ENCODE measurements at regions of chr19 and their contacts with region 1.

Region 1: GRCh38 chr19:30669329-30670010 is 297.3 kb downstream of the ZNF536 start:
- DNase-seq: no peak
- H3K4me3 ChIP-seq: no peak overlapping the region
- CTCF ChIP-seq: peak; percentile 87

Region 2: DNA sequence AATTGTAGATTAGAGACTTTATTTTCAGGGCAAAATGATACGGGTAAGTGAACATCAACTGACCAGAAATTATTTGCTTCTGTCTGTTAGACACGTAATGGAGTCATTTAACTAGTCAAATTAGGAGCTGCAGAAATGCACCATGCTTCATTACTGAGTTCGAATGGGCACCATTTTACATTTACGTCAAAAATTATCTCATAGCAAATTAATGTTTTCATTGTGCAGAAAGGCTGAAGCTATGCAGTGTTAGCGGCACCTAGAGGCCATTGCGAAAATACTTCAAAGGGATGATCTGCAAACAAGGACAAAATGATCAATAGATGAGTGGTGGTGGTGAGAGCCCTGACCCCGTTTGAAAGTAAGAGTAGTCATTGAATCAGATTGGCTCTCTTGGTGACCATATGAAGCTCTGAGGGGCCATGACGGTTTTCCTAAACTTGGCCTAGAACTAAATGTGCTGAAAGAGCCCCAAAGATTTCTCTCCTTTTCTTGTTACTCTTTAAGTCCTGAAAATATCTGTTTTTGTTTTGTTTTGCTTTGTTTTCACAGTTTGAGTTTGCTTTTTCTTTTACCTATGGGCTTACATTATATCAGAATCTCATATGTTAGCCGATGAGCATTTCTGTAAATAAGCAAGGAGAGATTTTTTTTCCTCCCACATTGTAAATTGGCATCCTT is 19.4 kb before region 1 on chr19:
- CTCF ChIA-PET with region 1: interaction called, 12 read pairs
- POLR2A ChIA-PET with region 1: no interaction called
- DNase-seq: peak; percentile 12
- H3K4me3 ChIP-seq: no peak overlapping the region
- CTCF ChIP-seq: peak; percentile 70

Region 3: GRCh38 chr19:30656520-30657100 is 12.9 kb before region 1 on chr19:
- CTCF ChIA-PET with region 1: interaction called, 12 read pairs
- POLR2A ChIA-PET with region 1: no interaction called
- DNase-seq: no peak
- H3K4me3 ChIP-seq: no peak overlapping the region
- CTCF ChIP-seq: no peak

Region 4: DNA sequence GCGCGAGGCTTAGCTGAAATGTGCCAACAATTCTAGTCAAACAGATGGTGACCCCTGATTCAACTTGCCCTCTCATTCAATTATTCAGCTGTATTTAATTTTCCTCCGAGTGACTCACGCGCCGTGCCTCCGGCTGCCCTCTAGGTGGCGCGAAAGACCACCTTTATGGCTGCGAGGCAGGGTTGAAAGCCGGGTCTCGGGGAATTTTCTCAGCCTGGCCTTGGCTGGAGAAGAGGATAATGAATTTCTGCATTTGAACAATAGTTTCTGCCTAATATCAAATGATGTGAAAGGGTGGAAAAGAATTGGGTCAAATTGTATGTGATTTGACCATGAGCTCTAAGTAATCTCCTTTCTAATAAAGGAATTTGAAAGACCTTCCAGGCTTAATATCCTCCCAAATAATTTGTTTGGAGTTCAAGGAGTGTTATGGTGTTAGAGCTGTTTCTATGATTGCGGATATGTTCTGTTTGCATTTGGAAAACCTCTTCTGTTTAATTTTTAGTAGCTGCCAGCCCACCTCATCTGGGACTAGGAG is 13.6 kb after region 1 on chr19:
- CTCF ChIA-PET with region 1: interaction called, 46 read pairs
- POLR2A ChIA-PET with region 1: no interaction called
- DNase-seq: peak; percentile 23
- H3K4me3 ChIP-seq: no peak overlapping the region
- CTCF ChIP-seq: peak; percentile 82